Colonic mucosa (tissue), 4 donors: ENCODE measurements at regions of chr1 and their contacts with region 1.

Region 1: GRCh38 chr1:48202030-48202752 is 20.3 kb upstream of the SLC5A9 start:
- DNase-seq: peak; percentile 74
- H3K4me3 ChIP-seq: no peak overlapping the region
- H3K27ac ChIP-seq: no peak overlapping the region
- H3K4me1 ChIP-seq: no peaks in the 10 kb centered on the region
- H3K27me3 ChIP-seq: no peaks in the 10 kb centered on the region
- CTCF ChIP-seq: peak; percentile 68

Region 2: DNA sequence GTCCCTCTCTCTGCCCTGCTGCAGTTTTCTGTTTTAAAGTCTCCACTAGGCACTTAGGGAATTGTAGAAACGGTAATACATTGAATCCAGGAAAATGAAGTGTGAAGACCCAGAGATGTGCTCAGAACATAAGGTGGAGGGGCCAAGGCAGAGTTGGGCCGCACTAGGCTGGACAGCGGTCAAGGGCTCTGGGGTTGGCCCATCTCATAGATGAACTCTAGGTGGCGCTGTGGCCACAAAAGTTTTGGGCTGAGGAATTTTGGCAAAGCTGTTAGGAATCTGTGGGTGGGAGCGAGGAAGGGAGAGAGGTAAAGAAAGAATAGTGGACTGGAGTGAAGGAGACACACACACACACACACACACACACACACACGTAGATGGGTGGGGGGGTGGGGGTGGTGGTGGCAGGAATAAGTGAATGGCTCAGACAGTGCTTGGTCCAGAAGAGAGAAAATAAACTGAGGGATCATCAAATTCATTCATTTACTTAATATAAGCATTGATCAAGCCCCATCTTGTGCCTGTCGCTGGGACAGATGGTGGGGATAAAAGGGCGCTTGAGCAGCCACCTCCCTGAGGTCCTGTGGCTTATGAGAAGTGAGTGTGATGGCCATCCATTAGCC is 463.5 kb before region 1 on chr1:
- intact Hi-C with region 1: loop called (anchors 5 kb)
- DNase-seq: peak; percentile 59
- H3K4me3 ChIP-seq: no peak overlapping the region
- H3K27ac ChIP-seq: no peak overlapping the region
- H3K4me1 ChIP-seq: no peaks in the 10 kb centered on the region
- H3K27me3 ChIP-seq: no peaks in the 10 kb centered on the region
- CTCF ChIP-seq: peak; percentile 68

Region 3: GRCh38 chr1:47997289-47998200 is 204.6 kb before region 1 on chr1 and contains the start of gene TRABD2B:
- intact Hi-C with region 1: loop called (anchors 5 kb)
- DNase-seq: peak; percentile 79
- H3K4me3 ChIP-seq: peak within 1 kb of the TSS; percentile 51
- H3K27ac ChIP-seq: no peak within 1 kb of the TSS
- H3K4me1 ChIP-seq: no peaks in the 10 kb centered on the region
- H3K27me3 ChIP-seq: peaks cover 9% of the 10 kb centered on the region
- CTCF ChIP-seq: peak; percentile 86
- total RNA-seq, gene TRABD2B: 0.42 to 0.77 TPM

Region 4: DNA sequence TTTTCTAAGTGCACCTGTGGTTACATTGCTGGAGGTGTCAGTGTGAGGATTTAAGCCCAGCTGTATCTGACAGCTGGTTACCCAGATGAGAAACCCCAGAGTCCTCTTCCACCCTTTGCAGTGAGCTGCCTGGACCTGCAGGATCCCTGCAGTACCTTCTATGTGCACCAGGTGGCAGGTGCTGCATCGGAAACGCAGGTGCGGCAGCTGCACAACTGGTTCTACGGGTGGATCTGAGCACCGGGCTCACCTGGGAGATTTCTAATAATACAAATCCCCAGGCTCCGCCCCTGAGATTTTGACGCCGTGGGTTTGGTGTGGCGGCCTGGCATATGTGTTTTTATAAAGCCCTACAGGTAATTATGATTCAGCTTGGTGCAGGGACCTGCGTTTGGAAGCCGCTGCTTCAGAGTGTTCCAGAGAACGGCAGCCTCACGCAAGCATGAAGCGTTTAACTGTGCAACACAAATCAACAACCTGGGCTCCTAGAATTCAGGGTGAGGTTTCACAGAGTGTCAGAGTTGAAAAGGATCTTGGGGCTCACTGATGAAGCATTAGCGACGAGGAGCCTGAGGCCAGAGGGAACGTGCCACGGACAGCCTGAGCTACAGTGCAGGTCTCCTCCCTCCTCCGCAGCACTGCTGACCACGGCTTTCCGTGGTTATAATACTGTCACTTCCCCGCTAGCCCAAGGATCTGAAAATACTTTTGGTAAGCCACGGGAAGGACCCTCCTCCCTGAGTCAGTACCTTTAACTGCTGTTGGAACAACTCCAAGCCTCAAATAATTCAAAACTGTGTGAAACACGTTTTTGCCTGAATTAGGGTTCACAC is 108.3 kb before region 1 on chr1:
- intact Hi-C with region 1: no loop called
- DNase-seq: peak; percentile 91
- H3K4me3 ChIP-seq: peak overlapping the region; percentile 9
- H3K27ac ChIP-seq: no peak overlapping the region
- H3K4me1 ChIP-seq: no peaks in the 10 kb centered on the region
- H3K27me3 ChIP-seq: no peaks in the 10 kb centered on the region
- CTCF ChIP-seq: peak; percentile 90

Region 5: DNA sequence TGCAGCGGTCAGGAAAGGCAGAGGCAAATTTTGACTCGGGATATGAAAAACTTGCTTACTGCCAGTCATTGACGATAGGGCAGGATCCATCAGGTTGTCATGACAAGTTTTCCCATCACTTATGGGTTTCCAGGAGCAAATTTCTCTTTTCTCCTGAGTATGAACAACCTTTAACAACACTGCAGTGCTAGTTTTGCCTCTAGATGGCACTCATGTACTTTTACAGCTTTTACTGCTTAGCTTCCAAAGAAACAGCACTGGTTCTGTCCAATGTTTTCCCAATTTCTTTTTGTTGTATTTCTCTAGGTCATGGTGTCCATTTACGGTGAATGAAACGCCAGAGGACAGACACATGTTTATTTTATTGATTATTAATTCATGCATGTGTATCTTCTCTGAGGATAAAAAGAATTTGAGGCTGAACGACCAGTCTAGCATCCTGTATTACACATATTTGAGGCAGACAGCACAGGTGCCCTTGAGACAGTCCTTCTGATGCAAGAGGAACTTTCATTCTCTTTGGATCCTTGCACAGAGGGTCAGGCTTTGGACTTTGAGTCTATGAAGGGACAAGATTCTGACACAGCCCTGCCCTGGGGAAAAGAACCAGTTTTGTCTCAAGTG is 92.7 kb before region 1 on chr1:
- intact Hi-C with region 1: loop called (anchors 5 kb)
- DNase-seq: peak; percentile 51
- H3K4me3 ChIP-seq: no peak overlapping the region
- H3K27ac ChIP-seq: no peak overlapping the region
- H3K4me1 ChIP-seq: no peaks in the 10 kb centered on the region
- H3K27me3 ChIP-seq: no peaks in the 10 kb centered on the region
- CTCF ChIP-seq: peak; percentile 75

Region 6: GRCh38 chr1:48182441-48182840 is 19.8 kb before region 1 on chr1:
- intact Hi-C with region 1: no loop called
- DNase-seq: no peak
- H3K4me3 ChIP-seq: no peak overlapping the region
- H3K27ac ChIP-seq: no peak overlapping the region
- H3K4me1 ChIP-seq: no peaks in the 10 kb centered on the region
- H3K27me3 ChIP-seq: no peaks in the 10 kb centered on the region
- CTCF ChIP-seq: no peak

Region 7: GRCh38 chr1:48761986-48762385 is 559.8 kb after region 1 on chr1:
- intact Hi-C with region 1: no loop called
- DNase-seq: no peak
- H3K4me3 ChIP-seq: no peak overlapping the region
- H3K27ac ChIP-seq: no peak overlapping the region
- H3K4me1 ChIP-seq: no peaks in the 10 kb centered on the region
- H3K27me3 ChIP-seq: no peaks in the 10 kb centered on the region
- CTCF ChIP-seq: no peak